Right cardiac atrium (tissue), 5 donors: ENCODE measurements at regions of chr20 and their contacts with region 1.

Region 1: DNA sequence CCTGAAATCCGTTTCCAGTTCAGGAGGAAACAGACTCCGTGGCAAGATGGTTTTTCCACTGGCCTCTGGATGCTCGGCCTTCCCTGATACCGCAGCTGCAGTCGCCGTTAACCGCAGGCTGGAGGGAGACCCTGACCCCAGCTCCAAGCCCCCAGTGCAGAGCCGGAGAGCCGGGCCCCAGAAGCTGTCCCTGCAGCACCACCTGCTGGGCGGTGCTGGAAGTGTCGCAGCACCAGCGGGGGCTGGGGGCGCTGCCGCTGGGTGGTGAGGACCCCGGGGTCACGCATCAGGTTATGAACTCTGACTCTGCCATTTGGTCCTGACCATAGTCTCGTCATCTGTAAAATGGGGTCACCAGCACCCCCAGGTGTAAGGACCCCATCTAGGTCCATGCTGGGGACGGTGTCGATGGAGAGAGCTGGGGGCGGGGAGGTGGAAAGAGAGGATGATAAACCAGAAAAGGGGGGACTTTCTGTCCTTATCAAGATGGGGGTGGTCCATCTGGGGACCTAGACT is 20.7 kb upstream of the CHRNA4 start:
- DNase-seq: peak in 2 of 3 donors; percentile 57 to 64
- ATAC-seq: peak; percentile 33 to 38
- H3K4me3 ChIP-seq: no peak overlapping the region
- H3K27ac ChIP-seq: no peak overlapping the region
- H3K4me1 ChIP-seq: no peaks in the 10 kb centered on the region
- H3K27me3 ChIP-seq: no peaks in the 10 kb centered on the region

Region 2: GRCh38 chr20:63042448-63043071 is 339.3 kb before region 1 on chr20:
- intact Hi-C with region 1: no loop called
- DNase-seq: peak in 1 of 3 donors; percentile 9
- ATAC-seq: no peak
- H3K4me3 ChIP-seq: no peak overlapping the region
- H3K27ac ChIP-seq: no peak overlapping the region
- H3K4me1 ChIP-seq: no peaks in the 10 kb centered on the region
- H3K27me3 ChIP-seq: no peaks in the 10 kb centered on the region

Region 3: GRCh38 chr20:63309261-63310071 is 72.4 kb before region 1 on chr20:
- intact Hi-C with region 1: loop called (anchors 1 to 2 kb)
- DNase-seq: peak; percentile 56 to 78 (median 77)
- ATAC-seq: peak; percentile 32 to 48
- H3K4me3 ChIP-seq: no peak overlapping the region
- H3K27ac ChIP-seq: no peak overlapping the region
- H3K4me1 ChIP-seq: no peaks in the 10 kb centered on the region
- H3K27me3 ChIP-seq: no peaks in the 10 kb centered on the region

Region 4: GRCh38 chr20:63482856-63483695 is 101.2 kb after region 1 on chr20:
- intact Hi-C with region 1: no loop called
- DNase-seq: peak; percentile 44 to 79 (median 64)
- ATAC-seq: peak; percentile 36 to 40
- H3K4me3 ChIP-seq: no peak overlapping the region
- H3K27ac ChIP-seq: no peak overlapping the region
- H3K4me1 ChIP-seq: no peaks in the 10 kb centered on the region
- H3K27me3 ChIP-seq: no peaks in the 10 kb centered on the region